ENCODE measurements at regions of chr14 and their contacts with region 1.

Region 1: GRCh38 chr14:103378038-103378854 is 7.0 kb upstream of the MARK3 start:
- DNase-seq: no peak
- H3K4me3 ChIP-seq: no peak overlapping the region
- H3K27ac ChIP-seq: no peak overlapping the region
- H3K4me1 ChIP-seq: peaks cover 11% of the 10 kb centered on the region
- H3K27me3 ChIP-seq: no peaks in the 10 kb centered on the region
- CTCF ChIP-seq: no peak

Region 2: GRCh38 chr14:102708494-102708893 is 669.8 kb before region 1 on chr14:
- CTCF ChIA-PET with region 1: no interaction called
- POLR2A ChIA-PET with region 1: interaction called, 10 read pairs
- intact Hi-C with region 1: no loop called
- DNase-seq: no peak
- H3K4me3 ChIP-seq: no peak overlapping the region
- H3K27ac ChIP-seq: no peak overlapping the region
- H3K4me1 ChIP-seq: peaks cover 15% of the 10 kb centered on the region
- H3K27me3 ChIP-seq: no peaks in the 10 kb centered on the region
- CTCF ChIP-seq: no peak

Region 3: GRCh38 chr14:103594265-103594664 is 216.0 kb after region 1 on chr14:
- CTCF ChIA-PET with region 1: no interaction called
- POLR2A ChIA-PET with region 1: no interaction called
- intact Hi-C with region 1: no loop called
- DNase-seq: peak; percentile 91 to 100
- H3K4me3 ChIP-seq: peak overlapping the region; percentile 9; the same call in 1 of the 2 replicates
- H3K27ac ChIP-seq: peak overlapping the region; percentile 77
- H3K4me1 ChIP-seq: peaks cover 42% of the 10 kb centered on the region
- H3K27me3 ChIP-seq: no peaks in the 10 kb centered on the region
- CTCF ChIP-seq: no peak

Region 4: DNA sequence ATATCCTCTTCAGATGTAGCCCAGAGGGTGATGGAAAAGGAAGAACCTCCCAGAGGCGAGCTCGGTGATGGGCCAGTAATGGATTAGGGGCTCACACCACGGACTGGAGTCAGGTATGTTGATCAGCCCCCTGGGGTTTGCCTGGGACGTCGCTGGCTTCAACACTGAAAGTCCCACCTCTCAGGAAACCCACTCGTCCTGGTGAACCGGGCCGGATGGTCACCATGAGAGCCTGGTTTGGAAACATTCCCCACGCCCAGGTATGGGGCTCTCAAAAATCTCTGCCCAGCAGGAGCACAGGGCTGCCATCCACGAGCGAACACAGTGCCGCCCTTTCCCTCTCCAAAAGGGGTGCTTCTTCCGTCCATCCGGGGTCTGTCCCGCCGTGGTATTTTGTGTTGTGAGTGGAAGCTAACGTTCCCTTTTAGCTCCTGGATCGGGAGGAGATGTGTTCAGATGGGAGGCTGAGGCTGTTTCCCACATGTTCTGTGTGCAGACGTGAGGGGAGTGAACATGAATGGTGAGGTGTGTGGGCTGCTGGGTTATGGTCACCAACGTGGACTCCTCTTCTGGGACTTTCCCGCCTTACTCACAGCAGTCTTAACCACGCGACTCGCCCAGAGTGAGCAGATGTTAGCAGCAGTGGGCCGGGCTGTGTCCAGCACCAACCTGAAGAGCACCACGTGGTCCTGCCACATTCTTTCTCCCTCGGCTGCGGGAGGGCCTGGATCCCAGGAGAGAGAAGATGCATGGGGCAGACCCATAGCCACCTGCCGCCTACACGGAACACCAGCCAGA is 899.4 kb after region 1 on chr14:
- CTCF ChIA-PET with region 1: no interaction called
- POLR2A ChIA-PET with region 1: no interaction called
- intact Hi-C with region 1: no loop called
- DNase-seq: no peak
- H3K4me3 ChIP-seq: no peak overlapping the region
- H3K27ac ChIP-seq: no peak overlapping the region
- H3K4me1 ChIP-seq: no peaks in the 10 kb centered on the region
- H3K27me3 ChIP-seq: peaks cover 85% of the 10 kb centered on the region
- CTCF ChIP-seq: no peak

Region 5: DNA sequence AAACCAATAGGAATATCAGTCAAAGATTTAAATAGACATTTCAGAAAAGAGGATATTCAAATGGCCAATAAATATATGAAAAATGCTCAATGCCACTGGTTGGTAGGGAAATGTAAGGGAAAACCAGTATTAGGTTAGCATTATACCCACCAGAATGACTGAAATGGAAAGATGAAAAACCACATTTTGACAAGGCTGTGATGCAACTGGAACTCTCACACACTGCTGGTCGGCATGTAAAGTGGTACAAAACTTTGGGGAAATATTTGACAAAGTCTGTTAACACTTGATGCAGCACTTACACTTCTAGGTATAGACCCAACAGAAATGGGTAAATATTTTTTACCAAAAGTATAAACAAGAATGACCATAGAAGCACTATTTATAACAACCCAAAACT is 1038.1 kb after region 1 on chr14:
- CTCF ChIA-PET with region 1: no interaction called
- POLR2A ChIA-PET with region 1: no interaction called
- intact Hi-C with region 1: no loop called
- DNase-seq: no peak
- H3K4me3 ChIP-seq: no peak overlapping the region
- H3K27ac ChIP-seq: no peak overlapping the region
- H3K4me1 ChIP-seq: no peaks in the 10 kb centered on the region
- H3K27me3 ChIP-seq: peaks cover 15% of the 10 kb centered on the region
- CTCF ChIP-seq: no peak